Prostate gland (tissue), 2 donors: ENCODE measurements at regions of chr1 and their contacts with region 1.

Region 1: DNA sequence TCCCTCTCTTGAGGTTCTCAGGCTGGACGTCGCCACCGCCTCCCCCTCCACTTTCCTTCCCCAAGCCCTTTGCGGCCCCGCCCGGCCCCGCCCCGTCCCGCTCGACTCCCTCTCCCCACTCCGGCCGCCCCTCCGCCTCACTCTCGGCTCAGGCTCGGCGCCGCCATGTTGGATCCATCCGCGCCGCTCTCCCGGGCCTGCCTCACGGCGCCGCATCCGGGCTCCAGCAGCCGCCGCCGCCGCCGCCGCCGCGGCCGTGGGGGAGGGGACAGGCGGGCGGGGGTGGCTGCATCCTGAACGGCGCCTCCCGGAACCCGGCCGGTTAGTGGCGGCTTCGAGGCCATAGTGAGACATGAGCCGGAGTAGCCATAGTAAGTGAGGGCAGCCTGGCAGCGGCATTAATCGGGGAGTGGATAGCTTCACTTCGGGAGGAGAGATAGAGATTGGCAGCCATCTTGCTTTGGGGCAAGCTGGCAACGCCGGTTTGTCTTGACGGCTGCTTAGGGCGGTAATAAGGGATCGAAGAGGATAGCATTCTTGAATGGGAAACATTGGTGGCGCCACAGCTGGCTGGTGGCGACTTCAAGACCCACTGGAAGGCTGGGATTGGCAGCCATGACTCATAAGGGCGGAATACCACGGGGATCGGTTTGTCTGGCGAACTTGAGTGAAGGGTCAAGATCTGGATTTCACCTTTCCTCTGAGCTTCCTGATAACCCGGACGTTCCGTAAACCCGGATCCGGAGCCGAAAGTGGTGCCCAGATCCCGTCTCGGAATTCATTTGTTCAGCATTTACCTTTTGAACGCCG is at the start of gene DEDD:
- DNase-seq: peak; percentile 94
- H3K4me3 ChIP-seq: peak within 1 kb of the TSS; percentile 69 to 77
- H3K27ac ChIP-seq: peak within 1 kb of the TSS; percentile 93 to 97
- H3K4me1 ChIP-seq: peaks cover 5% of the 10 kb centered on the region
- H3K27me3 ChIP-seq: no peaks in the 10 kb centered on the region
- CTCF ChIP-seq: peak in 2 of 4 experiments; percentile 3 to 7
- POLR2A ChIP-seq: peak; percentile 46
- total RNA-seq, gene DEDD: 30.1 to 41.5 TPM

Region 2: DNA sequence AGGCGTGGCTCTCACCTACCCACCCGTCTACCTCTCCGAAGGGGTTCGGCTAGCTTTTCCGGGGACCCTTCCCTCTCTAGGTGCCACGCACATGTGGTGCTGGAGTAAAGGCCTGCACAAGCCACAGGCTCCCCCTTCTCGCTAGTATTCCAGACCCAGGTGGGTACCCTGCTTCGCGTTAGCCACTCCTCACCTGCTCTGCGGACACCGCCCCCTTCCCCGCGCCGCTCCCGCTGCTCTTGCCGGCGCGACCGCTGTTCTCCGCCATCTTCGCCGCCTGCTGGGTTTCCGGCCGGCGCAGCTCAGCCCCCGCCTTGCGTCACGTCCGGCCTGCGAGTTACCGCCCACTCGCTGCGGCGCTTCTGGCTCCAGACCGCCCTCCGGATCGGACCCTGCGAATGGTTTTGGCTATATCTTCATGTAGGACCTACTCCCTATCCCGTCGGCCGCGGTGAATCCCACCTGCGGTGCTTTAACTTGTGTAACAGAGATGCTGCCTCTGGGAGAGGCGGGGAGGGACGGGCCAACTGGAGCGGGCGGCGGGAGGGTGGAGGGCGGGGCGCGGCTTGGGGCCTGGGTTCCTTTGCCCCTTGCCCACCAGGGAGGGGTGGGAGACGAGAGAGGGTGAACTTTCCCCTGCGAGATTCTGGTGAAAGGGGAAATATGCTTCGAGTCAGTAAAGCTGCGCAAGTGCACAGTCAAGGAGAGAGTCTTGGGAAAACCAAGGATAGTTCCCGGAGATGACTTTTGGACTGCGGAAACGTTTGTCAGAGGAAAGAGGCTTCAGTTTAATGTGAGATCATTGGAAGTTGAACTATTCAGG is 14.6 kb before region 1 on chr1 and contains the starts of genes NIT1 and PFDN2:
- intact Hi-C with region 1: loop called (anchors 2 kb)
- DNase-seq: peak; percentile 79
- H3K4me3 ChIP-seq: peak within 1 kb of the TSS; percentile 69 to 97
- H3K27ac ChIP-seq: peak within 1 kb of the TSS; percentile 92 to 94
- H3K4me1 ChIP-seq: peaks cover 11% of the 10 kb centered on the region
- H3K27me3 ChIP-seq: no peaks in the 10 kb centered on the region
- CTCF ChIP-seq: peak in 2 of 4 experiments; percentile 31 to 35
- POLR2A ChIP-seq: peak; percentile 78
- total RNA-seq, gene NIT1: 31.1 to 51.7 TPM
- total RNA-seq, gene PFDN2: 33.6 to 36.0 TPM

Region 3: DNA sequence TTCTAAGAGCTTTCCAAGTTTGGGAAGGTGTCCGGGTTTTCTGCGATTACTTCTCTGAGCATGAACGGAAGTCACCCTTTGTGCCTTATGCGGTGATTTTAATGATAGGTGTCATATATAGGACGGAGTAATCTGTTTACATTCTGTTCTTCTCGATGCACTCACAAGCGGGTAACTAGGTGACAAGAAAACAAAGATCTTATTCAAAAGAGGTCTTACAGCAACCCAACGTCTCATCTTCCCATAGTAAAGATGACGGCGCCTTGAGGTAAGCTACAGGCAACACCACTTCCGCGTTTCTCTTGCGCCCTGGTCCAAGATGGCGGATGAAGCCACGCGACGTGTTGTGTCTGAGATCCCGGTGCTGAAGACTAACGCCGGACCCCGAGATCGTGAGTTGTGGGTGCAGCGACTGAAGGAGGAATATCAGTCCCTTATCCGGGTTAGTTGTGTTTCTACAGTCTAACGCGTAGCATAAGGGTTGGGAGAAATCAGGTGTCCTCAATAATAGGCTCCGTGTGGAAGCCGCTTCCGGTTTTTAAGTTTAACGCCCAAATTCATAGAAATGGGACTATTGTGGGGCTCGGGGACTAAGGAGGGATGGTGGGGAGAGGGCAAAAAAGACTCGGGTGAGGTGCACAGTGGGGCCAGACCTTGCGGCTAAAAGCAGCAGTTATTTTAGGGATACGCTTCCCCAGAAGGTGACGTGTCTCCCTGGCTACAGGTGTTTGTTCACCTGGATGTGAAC is 21.2 kb after region 1 on chr1 and contains the start of gene UFC1:
- intact Hi-C with region 1: loop called (anchors 2 kb)
- DNase-seq: peak; percentile 82
- H3K4me3 ChIP-seq: peak within 1 kb of the TSS; percentile 63
- H3K27ac ChIP-seq: peak within 1 kb of the TSS; percentile 89 to 96
- H3K4me1 ChIP-seq: no peaks in the 10 kb centered on the region
- H3K27me3 ChIP-seq: no peaks in the 10 kb centered on the region
- CTCF ChIP-seq: peak in 1 of 4 experiments; percentile 7
- POLR2A ChIP-seq: peak; percentile 22
- total RNA-seq, gene UFC1: 71.3 to 72.8 TPM

Region 4: DNA sequence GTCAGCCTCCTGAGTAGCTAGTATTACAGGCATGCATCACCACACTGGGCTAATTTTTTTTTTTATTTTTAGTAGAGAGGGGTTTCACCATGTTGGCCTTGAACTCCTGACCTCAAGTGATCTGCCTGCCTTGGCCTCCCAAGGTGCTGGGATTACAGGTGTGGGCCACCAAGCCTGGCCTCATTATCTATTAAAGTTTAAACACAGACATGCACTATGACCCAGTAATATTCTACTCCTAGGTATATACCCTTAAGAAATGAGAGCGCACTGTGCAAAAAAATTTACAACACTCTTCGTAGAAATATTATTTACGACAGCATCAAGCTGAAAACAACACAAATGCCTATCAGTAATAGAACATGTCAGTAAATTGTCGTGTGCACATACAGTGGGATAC is 1298.0 kb after region 1 on chr1:
- intact Hi-C with region 1: no loop called
- DNase-seq: no peak
- H3K4me3 ChIP-seq: no peak overlapping the region
- H3K27ac ChIP-seq: no peak overlapping the region
- H3K4me1 ChIP-seq: no peaks in the 10 kb centered on the region
- H3K27me3 ChIP-seq: no peaks in the 10 kb centered on the region
- CTCF ChIP-seq: no peak
- POLR2A ChIP-seq: no peak